Heart right ventricle (tissue), 16 donors: ENCODE measurements at regions of chr11 and their contacts with region 1.

Region 1: DNA sequence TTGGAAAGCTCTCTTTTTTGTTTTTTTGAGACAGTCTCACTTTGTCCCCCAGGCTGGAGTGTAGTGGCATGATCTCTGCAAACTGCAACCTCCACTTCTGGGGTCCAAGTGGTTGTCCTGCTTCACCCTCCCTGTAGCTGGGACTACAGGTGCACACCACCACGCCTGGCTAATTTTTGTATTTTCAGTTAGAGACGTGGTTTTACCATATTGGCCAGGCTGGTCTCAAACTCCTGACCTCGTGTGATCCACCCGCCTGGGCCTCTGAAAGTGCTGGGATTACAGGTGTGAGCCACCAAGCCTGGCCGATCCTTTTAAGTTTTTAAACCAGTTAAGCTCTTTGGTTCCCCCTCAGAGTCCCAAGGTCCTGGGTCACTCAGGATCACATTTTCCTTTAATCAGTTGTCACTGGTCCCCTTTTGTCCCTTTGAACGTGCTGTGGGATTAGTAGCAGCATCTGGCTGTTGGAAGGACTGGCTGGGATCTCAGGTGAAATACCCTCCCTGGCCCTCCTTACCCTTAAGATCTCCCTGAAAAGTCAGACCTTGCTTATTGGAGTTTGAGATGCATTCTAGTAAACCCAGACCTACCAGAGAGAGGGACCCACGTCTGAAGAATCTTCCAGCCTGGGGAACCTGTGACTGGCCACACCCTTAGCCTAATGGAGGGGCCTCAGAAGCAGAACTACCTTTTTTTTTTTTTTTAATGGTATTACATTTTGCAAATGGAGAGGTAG is 8.1 kb downstream of the MALAT1 start:
- DNase-seq: no peak
- ATAC-seq: peak; percentile 15 to 53 (median 32)
- H3K4me3 ChIP-seq: peak overlapping the region in 8 of 10 donors; percentile 3 to 88 (median 83)
- H3K27ac ChIP-seq: peak overlapping the region; percentile 4 to 100 (median 99)
- H3K4me1 ChIP-seq: peaks cover 3 to 58% (median 43%) of the 10 kb centered on the region in 9 donors
- H3K27me3 ChIP-seq: no peaks in the 10 kb centered on the region
- CTCF ChIP-seq: no peak

Region 2: DNA sequence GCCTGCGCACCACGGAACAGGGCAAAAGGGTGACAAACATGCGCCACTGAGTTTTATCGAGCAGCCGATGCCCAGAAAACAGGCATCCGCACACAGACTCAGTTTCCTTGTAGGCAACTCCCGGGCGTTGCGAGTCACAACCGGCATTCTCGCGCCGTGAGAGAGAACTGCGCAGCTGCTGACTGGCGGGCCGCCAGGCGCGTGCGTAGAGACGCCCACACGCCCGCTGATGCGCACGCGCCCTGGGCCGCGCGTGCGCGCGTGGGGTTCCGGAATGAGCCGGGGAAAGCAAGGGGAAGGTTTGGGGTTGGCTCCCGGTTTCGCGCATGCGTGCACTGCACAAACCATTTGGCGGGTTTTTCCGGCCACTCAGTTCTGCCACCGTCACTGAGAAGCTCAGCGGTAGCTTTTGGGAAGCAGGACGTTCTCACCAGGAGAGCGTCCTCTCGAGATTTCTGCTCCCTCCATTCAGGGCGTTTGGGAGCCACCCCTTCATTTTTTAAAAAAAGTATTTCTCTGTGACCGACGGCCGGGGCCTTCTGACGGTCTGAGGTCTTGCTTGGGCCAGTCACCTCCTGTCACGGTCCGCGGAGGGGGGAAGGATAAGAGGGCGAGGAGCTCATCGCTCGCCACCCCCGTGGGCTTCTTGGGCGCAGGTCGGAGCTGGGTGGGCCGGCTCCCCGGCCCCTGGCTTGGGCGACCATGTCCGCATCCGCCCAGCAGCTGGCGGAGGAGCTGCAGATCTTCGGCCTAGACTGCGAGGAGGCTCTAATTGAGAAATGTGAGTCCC is 245.2 kb before region 1 on chr11 and contains the start of gene POLA2:
- intact Hi-C with region 1: no loop called
- DNase-seq: peak; percentile 95 to 97
- ATAC-seq: peak; percentile 96 to 98 (median 96)
- H3K4me3 ChIP-seq: peak within 1 kb of the TSS; percentile 51 to 90 (median 74)
- H3K27ac ChIP-seq: peak within 1 kb of the TSS; percentile 63 to 96 (median 90)
- H3K4me1 ChIP-seq: peaks cover 4 to 21% (median 11%) of the 10 kb centered on the region in 9 donors
- H3K27me3 ChIP-seq: no peaks in the 10 kb centered on the region
- CTCF ChIP-seq: no peak
- total RNA-seq, gene POLA2: 2.3 to 7.3 (median 3.8) TPM

Region 3: GRCh38 chr11:65366340-65366773 is 140.6 kb before region 1 on chr11:
- intact Hi-C with region 1: loop called in 7 of 10 experiments (anchors 1 to 5 kb)
- DNase-seq: peak in 1 of 2 donors; percentile 50
- ATAC-seq: peak; percentile 53 to 73 (median 69)
- H3K4me3 ChIP-seq: no peak overlapping the region
- H3K27ac ChIP-seq: peak overlapping the region in 9 of 10 donors; percentile 13 to 68 (median 45)
- H3K4me1 ChIP-seq: peaks cover 0 to 33% (median 19%) of the 10 kb centered on the region in 9 donors
- H3K27me3 ChIP-seq: no peaks in the 10 kb centered on the region
- CTCF ChIP-seq: peak; percentile 64 to 84 (median 82)

Region 4: GRCh38 chr11:65382033-65382807 is 124.7 kb before region 1 on chr11 and contains the start of gene SLC25A45:
- intact Hi-C with region 1: loop called in 8 of 10 experiments (anchors 1 to 5 kb)
- DNase-seq: peak; percentile 90 to 93
- ATAC-seq: peak; percentile 89 to 96 (median 94)
- H3K4me3 ChIP-seq: peak within 1 kb of the TSS; percentile 27 to 74 (median 56)
- H3K27ac ChIP-seq: peak within 1 kb of the TSS; percentile 94 to 99 (median 98)
- H3K4me1 ChIP-seq: peaks cover 13 to 74% (median 47%) of the 10 kb centered on the region in 9 donors
- H3K27me3 ChIP-seq: no peaks in the 10 kb centered on the region
- CTCF ChIP-seq: peak; percentile 79 to 98 (median 86)
- total RNA-seq, gene SLC25A45: 4.6 to 12.2 (median 8.3) TPM

Region 5: DNA sequence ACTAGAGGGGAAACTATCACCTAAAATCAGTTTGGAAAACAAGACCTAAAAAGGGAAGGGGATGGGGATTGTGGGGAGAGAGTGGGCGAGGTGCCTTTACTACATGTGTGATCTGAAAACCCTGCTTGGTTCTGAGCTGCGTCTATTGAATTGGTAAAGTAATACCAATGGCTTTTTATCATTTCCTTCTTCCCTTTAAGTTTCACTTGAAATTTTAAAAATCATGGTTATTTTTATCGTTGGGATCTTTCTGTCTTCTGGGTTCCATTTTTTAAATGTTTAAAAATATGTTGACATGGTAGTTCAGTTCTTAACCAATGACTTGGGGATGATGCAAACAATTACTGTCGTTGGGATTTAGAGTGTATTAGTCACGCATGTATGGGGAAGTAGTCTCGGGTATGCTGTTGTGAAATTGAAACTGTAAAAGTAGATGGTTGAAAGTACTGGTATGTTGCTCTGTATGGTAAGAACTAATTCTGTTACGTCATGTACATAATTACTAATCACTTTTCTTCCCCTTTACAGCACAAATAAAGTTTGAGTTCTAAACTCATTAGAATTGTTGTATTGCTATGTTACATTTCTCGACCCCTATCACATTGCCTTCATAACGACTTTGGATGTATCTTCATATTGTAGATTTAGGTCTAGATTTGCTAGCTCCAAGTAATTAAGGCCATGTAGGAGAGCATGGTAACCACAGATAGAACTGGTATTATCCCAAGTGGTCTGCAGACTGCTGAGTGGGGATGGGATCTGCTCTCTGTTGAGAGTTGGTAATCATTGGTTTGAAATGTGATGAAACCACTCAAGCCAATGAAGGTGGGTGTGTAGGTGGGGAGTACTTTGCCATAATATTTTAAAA is 80.7 kb before region 1 on chr11:
- intact Hi-C with region 1: loop called in 2 of 10 experiments (anchors 2 to 5 kb)
- DNase-seq: no peak
- ATAC-seq: no peak
- H3K4me3 ChIP-seq: peak overlapping the region; percentile 61 to 99 (median 90)
- H3K27ac ChIP-seq: peak overlapping the region in 9 of 10 donors; percentile 29 to 100 (median 100)
- H3K4me1 ChIP-seq: peaks cover 8 to 57% (median 48%) of the 10 kb centered on the region in 9 donors
- H3K27me3 ChIP-seq: no peaks in the 10 kb centered on the region
- CTCF ChIP-seq: no peak

Region 6: DNA sequence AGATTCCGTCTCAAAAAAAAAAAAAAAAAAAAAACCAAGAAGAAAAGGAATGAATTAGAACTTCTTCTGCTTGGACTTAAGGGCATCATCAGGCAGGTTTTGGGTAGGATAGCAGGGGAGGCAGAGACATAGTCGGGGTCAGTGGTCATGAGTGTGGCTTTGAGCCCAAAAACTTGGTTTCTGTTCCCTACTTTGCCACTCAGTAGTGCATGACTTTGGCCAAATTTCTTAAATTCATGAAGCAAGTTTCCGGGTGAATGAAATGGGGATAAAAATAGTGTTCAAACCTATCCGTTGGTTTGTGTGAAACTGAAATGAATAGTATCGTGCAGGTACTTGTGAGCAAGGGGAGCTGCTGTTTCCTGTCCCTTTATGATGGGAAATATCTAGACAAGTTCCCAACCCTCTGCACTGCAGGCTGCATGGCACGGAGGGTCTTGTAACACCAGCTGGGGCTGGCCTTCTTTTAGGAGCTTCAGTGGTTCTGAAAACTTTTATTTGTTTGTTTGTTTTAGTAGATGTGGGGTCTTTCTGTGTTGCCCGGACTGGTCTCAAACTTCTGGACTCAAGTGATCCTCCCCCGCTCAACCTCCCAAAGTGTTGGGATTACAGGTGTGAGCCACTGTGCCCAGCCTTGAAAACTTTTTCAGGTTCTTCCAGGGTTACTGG is 66.0 kb before region 1 on chr11:
- intact Hi-C with region 1: no loop called
- DNase-seq: no peak
- ATAC-seq: no peak
- H3K4me3 ChIP-seq: peak overlapping the region in 5 of 10 donors; percentile 0 to 30 (median 7)
- H3K27ac ChIP-seq: peak overlapping the region in 7 of 10 donors; percentile 11 to 70 (median 59)
- H3K4me1 ChIP-seq: peaks cover 22 to 100% (median 91%) of the 10 kb centered on the region in 9 donors
- H3K27me3 ChIP-seq: no peaks in the 10 kb centered on the region
- CTCF ChIP-seq: no peak

Region 7: DNA sequence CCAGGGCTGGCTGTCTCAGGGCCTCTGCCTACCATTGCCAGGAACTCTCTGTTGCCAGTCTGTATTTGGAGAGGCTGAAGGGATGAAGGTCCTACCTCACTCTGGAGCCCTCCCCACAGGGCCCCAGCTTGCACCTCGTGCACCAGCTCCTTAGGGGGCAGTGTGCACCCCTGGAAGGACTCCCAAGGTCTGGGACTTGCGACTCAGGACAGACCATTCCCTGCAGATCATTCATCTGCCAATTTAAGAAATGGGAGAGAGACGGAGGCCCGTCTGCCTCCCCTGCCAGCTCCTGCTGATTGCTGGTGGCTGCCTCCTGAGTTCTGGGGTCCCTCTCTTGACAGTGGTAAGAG is 35.6 kb before region 1 on chr11:
- intact Hi-C with region 1: loop called in 9 of 10 experiments (anchors 2 to 10 kb)
- DNase-seq: peak; percentile 81 to 85
- ATAC-seq: peak; percentile 85 to 94 (median 90)
- H3K4me3 ChIP-seq: peak overlapping the region in 9 of 10 donors; percentile 10 to 44 (median 33)
- H3K27ac ChIP-seq: peak overlapping the region; percentile 86 to 100 (median 98)
- H3K4me1 ChIP-seq: peaks cover 16 to 57% (median 41%) of the 10 kb centered on the region in 9 donors
- H3K27me3 ChIP-seq: no peaks in the 10 kb centered on the region
- CTCF ChIP-seq: peak; percentile 49 to 84 (median 72)

Region 8: DNA sequence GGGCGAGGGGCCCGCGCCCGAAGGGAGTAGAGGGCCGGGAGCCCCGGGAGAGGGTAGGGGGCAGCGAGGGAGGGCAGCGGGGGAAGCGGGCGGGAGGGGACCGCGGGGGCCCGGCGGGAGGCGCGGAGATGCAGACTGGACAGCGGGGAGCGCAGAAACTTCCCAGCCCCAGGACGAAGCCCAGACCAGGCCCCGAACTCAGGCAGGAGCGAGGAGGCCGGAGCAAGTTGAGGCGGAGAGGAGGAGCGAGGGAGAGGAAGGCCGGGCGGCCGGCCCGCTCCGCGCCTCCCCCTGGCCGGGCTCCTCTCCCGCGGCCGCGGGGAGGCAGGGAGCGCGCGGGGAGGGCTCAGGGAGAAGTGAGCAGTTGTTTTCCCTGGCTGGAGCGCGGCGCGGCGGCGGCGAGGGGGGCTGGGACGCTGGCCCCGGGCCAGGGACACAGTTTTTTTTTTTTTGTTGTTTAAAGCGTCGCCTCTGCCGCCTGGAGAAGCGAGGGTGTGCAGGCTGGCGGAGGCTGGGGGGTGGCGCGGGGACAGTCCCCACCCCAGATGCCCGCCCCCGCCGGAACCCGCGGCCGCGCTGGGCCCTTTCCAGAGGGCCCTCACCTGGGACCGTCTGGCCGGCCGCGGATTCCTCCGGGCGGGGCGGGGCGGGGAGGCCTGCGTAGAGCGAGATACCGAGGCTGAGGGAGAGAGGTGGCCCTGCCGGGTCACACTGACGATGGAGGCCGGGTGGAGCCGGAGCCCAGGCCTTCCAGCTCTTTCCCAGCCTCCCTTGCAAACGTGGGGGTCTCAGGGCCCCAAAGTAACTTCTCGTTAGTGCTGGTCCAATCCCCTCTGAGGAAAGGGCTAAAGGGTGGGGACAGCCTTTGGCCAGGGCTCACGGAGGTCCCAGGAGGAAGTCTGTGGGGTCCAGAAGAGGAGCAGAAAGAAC is 51.3 kb after region 1 on chr11 and contains the start of gene LTBP3:
- intact Hi-C with region 1: no loop called
- DNase-seq: peak; percentile 84 to 87
- ATAC-seq: peak; percentile 76 to 90 (median 82)
- H3K4me3 ChIP-seq: peak within 1 kb of the TSS; percentile 35 to 76 (median 64)
- H3K27ac ChIP-seq: peak within 1 kb of the TSS; percentile 84 to 99 (median 94)
- H3K4me1 ChIP-seq: peaks cover 38 to 75% (median 57%) of the 10 kb centered on the region in 9 donors
- H3K27me3 ChIP-seq: peaks cover 0 to 9% (median 0%) of the 10 kb centered on the region in 7 donors
- CTCF ChIP-seq: peak in 3 of 9 donors; percentile 29 to 35 (median 34)
- total RNA-seq, gene LTBP3: 54.4 to 92.5 (median 72.8) TPM

Region 9: GRCh38 chr11:65961232-65961901 is 454.4 kb after region 1 on chr11 and contains the start of gene SART1:
- intact Hi-C with region 1: no loop called
- DNase-seq: peak; percentile 97 to 99
- ATAC-seq: peak; percentile 97 to 99 (median 99)
- H3K4me3 ChIP-seq: peak within 1 kb of the TSS; percentile 80 to 100 (median 92)
- H3K27ac ChIP-seq: peak within 1 kb of the TSS; percentile 74 to 98 (median 92)
- H3K4me1 ChIP-seq: peaks cover 6 to 34% (median 27%) of the 10 kb centered on the region in 9 donors
- H3K27me3 ChIP-seq: no peaks in the 10 kb centered on the region
- CTCF ChIP-seq: peak in 1 of 9 donors; percentile 10
- total RNA-seq, gene SART1: 26.2 to 40.1 (median 32.5) TPM